ENCODE measurements at regions of chr5 and their contacts with region 1.

Region 1: GRCh38 chr5:78221964-78222451 is 72.5 kb downstream of the AP3B1 start:
- DNase-seq: peak; percentile 94
- H3K4me3 ChIP-seq: no peak overlapping the region
- H3K27ac ChIP-seq: no peak overlapping the region
- H3K4me1 ChIP-seq: peaks cover 21% of the 10 kb centered on the region
- CTCF ChIP-seq: peak; percentile 74

Region 2: DNA sequence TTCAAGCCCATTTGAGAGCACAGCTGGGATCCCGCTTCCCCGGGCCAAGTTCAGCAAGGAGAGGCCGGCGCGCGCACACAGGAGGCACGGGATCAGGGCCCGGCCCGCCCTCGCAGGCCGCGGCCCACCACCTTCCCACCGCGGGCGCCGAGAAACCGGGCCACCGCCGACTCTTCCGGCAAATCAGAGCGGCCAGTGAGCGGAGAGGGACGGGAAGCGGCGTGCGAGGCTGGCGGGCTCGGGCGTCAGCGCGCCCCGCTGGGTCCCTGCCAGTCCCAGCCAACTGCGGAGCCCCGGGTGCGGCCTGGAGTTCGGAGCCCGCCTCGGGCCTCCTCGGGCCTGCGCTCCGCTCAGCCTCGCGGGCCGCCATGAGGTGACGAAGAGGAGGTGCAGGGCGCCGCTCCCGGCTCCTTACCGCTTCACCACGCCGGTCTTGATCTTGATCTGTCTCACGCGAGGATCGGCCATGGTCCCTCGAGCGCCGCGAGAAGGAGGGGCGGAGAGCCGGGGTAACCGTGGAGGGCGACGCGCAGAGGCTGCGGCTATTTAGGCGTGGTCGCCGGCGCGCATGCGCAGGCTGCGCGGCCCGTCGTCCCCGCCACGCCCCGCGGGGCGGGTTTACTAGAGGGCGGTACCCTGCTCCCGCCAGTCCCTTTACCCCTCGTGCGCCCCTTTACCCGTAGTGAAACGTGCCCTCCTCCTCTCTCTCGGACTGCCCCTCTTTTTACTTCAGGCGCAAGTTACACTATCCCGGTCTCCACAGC is 446.0 kb before region 1 on chr5 and contains the start of gene TBCA:
- CTCF ChIA-PET with region 1: no interaction called
- POLR2A ChIA-PET with region 1: no interaction called
- intact Hi-C with region 1: no loop called
- DNase-seq: peak; percentile 94
- H3K4me3 ChIP-seq: peak within 1 kb of the TSS; percentile 77
- H3K27ac ChIP-seq: peak within 1 kb of the TSS; percentile 80
- H3K4me1 ChIP-seq: peaks cover 30% of the 10 kb centered on the region
- CTCF ChIP-seq: peak; percentile 47; the same call in 1 of the 2 replicates
- total RNA-seq, gene TBCA: 174 and 214 TPM in 2 replicates

Region 3: DNA sequence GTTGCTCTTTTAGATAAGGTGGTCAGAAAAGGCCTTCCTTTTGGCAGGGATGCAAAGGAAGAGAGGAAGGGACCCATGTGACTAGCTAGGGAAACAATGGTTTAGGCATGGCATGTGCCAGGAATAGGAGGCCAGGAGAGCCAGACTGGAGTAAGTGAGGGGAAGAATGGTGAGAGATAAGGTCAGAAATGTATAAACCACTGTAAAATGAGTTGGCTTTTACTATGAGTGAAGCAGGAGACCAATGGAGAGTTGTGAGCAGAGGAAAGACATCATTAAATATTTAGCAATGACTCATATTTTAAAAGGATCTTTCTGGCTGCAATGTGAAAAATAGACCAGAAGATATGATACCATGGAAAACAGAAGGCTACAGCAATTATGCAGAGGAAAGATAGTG is 21.6 kb after region 1 on chr5:
- CTCF ChIA-PET with region 1: no interaction called
- POLR2A ChIA-PET with region 1: no interaction called
- intact Hi-C with region 1: no loop called
- DNase-seq: no peak
- H3K4me3 ChIP-seq: no peak overlapping the region
- H3K27ac ChIP-seq: no peak overlapping the region
- H3K4me1 ChIP-seq: no peaks in the 10 kb centered on the region
- CTCF ChIP-seq: no peak

Region 4: GRCh38 chr5:78269088-78269703 is 47.2 kb after region 1 on chr5:
- CTCF ChIA-PET with region 1: no interaction called
- POLR2A ChIA-PET with region 1: no interaction called
- intact Hi-C with region 1: loop called (anchors 2 kb)
- DNase-seq: peak; percentile 32
- H3K4me3 ChIP-seq: no peak overlapping the region
- H3K27ac ChIP-seq: no peak overlapping the region
- H3K4me1 ChIP-seq: peaks cover 10% of the 10 kb centered on the region
- CTCF ChIP-seq: peak; percentile 86

Region 5: GRCh38 chr5:78294248-78295034 is 72.4 kb after region 1 on chr5 and contains the start of gene AP3B1:
- CTCF ChIA-PET with region 1: no interaction called
- POLR2A ChIA-PET with region 1: no interaction called
- intact Hi-C with region 1: loop called (anchors 2 kb)
- DNase-seq: peak; percentile 100
- H3K4me3 ChIP-seq: peak within 1 kb of the TSS; percentile 97
- H3K27ac ChIP-seq: peak within 1 kb of the TSS; percentile 55
- H3K4me1 ChIP-seq: peaks cover 33% of the 10 kb centered on the region
- CTCF ChIP-seq: no peak
- total RNA-seq, gene AP3B1: 25.7 and 32.5 TPM in 2 replicates

Region 6: GRCh38 chr5:78320401-78320800 is 98.4 kb after region 1 on chr5:
- CTCF ChIA-PET with region 1: no interaction called
- POLR2A ChIA-PET with region 1: no interaction called
- intact Hi-C with region 1: no loop called
- DNase-seq: peak; percentile 32
- H3K4me3 ChIP-seq: no peak overlapping the region
- H3K27ac ChIP-seq: no peak overlapping the region
- H3K4me1 ChIP-seq: no peaks in the 10 kb centered on the region
- CTCF ChIP-seq: peak; percentile 78